ENCODE measurements at regions of chr1 and their contacts with region 1.

Region 1: GRCh38 chr1:183891158-183891856 is 86.4 kb downstream of the RGL1 start:
- DNase-seq: no peak
- ATAC-seq: no peak
- H3K4me3 ChIP-seq: peak overlapping the region; percentile 41; the same call in 1 of the 2 replicates
- H3K27ac ChIP-seq: peak overlapping the region; percentile 86
- H3K4me1 ChIP-seq: peaks cover 55% of the 10 kb centered on the region
- H3K27me3 ChIP-seq: no peaks in the 10 kb centered on the region
- CTCF ChIP-seq: no peak

Region 2: DNA sequence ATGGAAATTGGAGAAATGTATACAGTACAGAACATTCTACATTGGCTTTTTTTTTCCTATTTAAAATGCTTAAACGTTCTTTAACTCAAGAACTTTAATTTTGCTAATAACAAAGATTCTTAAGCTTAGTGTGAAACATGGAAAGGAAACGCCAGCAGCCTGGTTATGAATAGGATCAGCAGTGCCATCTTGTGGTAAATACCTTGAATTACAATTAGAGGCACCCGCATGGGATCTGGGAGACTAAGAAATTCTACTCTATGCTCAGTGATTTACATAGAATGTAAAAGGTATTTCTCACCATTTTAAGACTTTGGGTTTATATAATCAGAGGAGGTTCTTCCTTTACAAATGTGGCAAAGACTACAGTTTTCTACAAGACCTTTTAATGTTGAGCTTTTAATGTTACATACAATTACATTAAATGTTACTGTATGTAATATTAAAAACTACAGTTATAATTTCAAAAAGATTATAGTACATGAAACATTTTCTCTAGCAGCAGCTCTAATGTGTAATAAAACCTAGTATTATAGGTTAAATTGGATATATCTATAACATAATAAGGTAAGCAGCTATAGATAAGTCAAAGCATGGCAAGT is 206.1 kb before region 1 on chr1:
- CTCF ChIA-PET with region 1: no interaction called
- POLR2A ChIA-PET with region 1: no interaction called
- intact Hi-C with region 1: loop called (anchors 5 kb)
- DNase-seq: peak; percentile 67
- ATAC-seq: peak; percentile 55; the same call in 1 of the 2 replicates
- H3K4me3 ChIP-seq: no peak overlapping the region
- H3K27ac ChIP-seq: no peak overlapping the region
- H3K4me1 ChIP-seq: no peaks in the 10 kb centered on the region
- H3K27me3 ChIP-seq: no peaks in the 10 kb centered on the region
- CTCF ChIP-seq: peak; percentile 69

Region 3: GRCh38 chr1:183804881-183805841 is 86.1 kb before region 1 on chr1 and contains the start of gene RGL1:
- CTCF ChIA-PET with region 1: no interaction called
- POLR2A ChIA-PET with region 1: interaction called, 4 read pairs
- intact Hi-C with region 1: loop called (anchors 5 kb)
- DNase-seq: peak; percentile 67
- ATAC-seq: peak; percentile 85
- H3K4me3 ChIP-seq: peak within 1 kb of the TSS; percentile 76
- H3K27ac ChIP-seq: no peak within 1 kb of the TSS
- H3K4me1 ChIP-seq: peaks cover 32% of the 10 kb centered on the region
- H3K27me3 ChIP-seq: no peaks in the 10 kb centered on the region
- CTCF ChIP-seq: no peak
- total RNA-seq, gene RGL1: 1.5 and 1.9 TPM in 2 replicates

Region 4: DNA sequence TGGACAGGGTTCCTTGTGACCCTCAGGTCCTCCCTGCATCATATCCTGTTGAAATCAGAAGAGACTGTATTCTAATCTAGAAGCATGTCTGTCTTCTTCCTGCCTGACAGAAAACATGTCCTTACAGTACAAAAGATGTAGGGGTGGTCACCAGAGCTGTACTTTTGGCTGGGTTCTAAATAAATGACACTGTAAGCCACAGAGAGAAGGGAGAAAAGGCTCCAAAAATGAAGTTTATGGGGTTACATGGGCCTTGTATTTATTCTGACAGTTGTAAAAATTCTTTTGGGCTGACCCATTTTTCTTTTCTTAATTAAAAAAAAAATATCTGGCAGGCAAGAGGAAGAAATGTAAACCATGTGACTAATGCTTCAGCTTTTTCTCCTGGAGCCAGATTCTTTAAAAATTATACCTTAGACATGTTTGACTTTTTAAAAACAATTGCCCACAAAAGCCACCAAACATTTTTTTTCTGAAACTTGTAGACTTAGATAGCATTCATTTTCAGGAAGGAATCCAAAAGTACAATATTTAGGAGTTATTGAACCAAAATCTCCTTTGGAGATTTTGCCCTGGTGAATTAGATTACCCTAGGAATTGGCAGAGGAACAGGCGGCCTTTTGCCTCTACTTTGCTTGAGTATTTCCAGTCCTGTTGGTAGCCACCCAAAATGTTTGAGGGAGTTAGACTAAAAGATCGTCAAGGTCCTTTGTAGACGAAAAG is 69.3 kb before region 1 on chr1:
- CTCF ChIA-PET with region 1: no interaction called
- POLR2A ChIA-PET with region 1: no interaction called
- intact Hi-C with region 1: loop called (anchors 1 kb)
- DNase-seq: peak; percentile 68
- ATAC-seq: peak; percentile 90
- H3K4me3 ChIP-seq: no peak overlapping the region
- H3K27ac ChIP-seq: peak overlapping the region; percentile 51
- H3K4me1 ChIP-seq: peaks cover 28% of the 10 kb centered on the region
- H3K27me3 ChIP-seq: no peaks in the 10 kb centered on the region
- CTCF ChIP-seq: no peak

Region 5: GRCh38 chr1:184069675-184070074 is 178.4 kb after region 1 on chr1:
- CTCF ChIA-PET with region 1: no interaction called
- POLR2A ChIA-PET with region 1: no interaction called
- intact Hi-C with region 1: no loop called
- DNase-seq: no peak
- ATAC-seq: no peak
- H3K4me3 ChIP-seq: no peak overlapping the region
- H3K27ac ChIP-seq: no peak overlapping the region
- H3K4me1 ChIP-seq: no peaks in the 10 kb centered on the region
- H3K27me3 ChIP-seq: no peaks in the 10 kb centered on the region
- CTCF ChIP-seq: no peak